ENCODE measurements at regions of chr3 and their contacts with region 1.

Region 1: GRCh38 chr3:51941798-51942602 is at the starts of genes PARP3 and RRP9:
- DNase-seq: peak; percentile 100
- CTCF ChIP-seq: peak; percentile 99

Region 2: DNA sequence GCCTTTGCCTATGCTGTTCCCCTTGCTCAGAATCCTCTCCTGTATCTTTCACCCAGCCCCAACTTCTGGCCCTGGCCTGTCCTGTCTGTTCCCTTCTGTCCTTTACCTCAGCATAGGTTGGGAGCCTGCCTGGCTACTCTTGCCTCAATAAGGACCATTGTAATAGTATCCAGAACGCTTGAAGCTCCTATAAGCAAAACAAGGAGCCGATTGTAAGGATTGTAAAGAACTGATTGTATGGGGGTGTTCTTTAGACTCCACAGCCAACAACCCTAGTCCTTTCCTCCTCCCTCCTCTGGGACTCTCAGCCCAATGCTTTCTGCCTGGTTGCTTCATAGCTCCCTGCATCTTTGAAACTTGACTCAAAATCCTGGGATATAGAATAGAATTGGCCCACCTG is 422.2 kb before region 1 on chr3:
- CTCF ChIA-PET with region 1: no interaction called
- POLR2A ChIA-PET with region 1: no interaction called
- DNase-seq: no peak
- CTCF ChIP-seq: no peak

Region 3: DNA sequence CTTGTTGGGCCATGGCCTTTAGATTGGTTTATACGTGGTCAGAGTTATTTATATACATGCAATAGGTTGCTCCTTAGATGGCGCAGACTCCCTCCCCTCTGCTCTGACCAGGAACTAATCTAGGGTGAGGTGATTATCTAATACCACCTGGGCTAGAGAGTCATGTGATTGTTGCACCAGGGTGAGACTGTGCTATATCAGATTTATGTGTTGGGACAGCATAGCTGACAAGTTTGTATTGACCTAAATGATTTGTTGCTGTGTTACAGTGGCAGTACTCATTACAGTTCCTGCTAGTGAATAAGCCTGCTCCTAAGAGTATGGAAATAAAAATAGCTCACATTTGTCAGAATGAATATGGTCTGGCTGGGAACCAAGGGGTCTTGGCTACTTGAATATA is 155.7 kb before region 1 on chr3:
- CTCF ChIA-PET with region 1: no interaction called
- POLR2A ChIA-PET with region 1: no interaction called
- DNase-seq: no peak
- CTCF ChIP-seq: no peak

Region 4: GRCh38 chr3:51955893-51956770 is 14.1 kb after region 1 on chr3:
- CTCF ChIA-PET with region 1: interaction called, 32 read pairs
- POLR2A ChIA-PET with region 1: no interaction called
- DNase-seq: no peak
- CTCF ChIP-seq: peak; percentile 17

Region 5: DNA sequence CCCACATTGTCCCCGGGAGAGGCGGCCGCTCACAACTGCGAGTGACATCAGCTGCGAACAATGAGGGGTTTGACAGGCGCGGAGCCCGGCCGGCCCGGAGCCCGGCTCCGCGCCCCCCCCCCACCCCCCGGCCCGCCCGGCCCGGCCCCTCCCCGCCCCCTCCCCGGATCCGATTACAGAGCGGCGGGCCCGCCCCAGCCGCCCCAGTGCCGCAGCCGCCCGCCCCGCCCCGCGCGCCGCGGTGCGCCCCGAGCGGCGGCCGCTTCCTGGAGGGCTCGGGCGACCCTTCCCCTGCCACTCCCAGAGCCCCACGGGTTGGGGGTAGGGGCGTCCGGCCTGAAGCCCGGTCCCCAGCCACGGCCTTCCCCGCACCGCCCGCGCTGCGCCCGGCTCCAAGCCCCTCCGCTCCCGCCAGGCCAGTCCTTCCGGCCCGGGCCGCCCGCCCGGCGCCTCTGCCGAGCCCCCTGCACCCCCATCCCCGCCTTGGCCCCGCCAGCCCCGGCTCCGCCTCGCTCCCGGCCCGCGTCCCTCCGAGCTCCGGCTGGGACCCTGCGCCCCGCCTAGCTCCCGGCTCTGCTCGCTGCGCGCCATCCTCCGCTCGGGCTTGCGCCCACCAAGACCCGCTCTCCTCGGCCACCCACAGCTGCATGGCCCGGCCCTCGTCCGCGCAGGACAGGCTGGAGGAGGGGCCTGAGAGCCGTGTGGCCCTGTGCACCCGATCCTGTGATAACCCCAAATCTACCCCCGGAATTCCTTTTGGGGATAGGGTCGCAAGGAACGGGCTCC is 25.6 kb after region 1 on chr3 and contains the start of gene PCBP4:
- CTCF ChIA-PET with region 1: interaction called, 42 read pairs
- POLR2A ChIA-PET with region 1: no interaction called
- DNase-seq: peak; percentile 57
- CTCF ChIP-seq: no peak

Region 6: GRCh38 chr3:51974963-51975851 is 33.2 kb after region 1 on chr3 and contains the start of gene ABHD14A:
- CTCF ChIA-PET with region 1: interaction called, 42 read pairs
- POLR2A ChIA-PET with region 1: interaction called, 3 read pairs
- DNase-seq: peak; percentile 92
- CTCF ChIP-seq: no peak

Region 7: DNA sequence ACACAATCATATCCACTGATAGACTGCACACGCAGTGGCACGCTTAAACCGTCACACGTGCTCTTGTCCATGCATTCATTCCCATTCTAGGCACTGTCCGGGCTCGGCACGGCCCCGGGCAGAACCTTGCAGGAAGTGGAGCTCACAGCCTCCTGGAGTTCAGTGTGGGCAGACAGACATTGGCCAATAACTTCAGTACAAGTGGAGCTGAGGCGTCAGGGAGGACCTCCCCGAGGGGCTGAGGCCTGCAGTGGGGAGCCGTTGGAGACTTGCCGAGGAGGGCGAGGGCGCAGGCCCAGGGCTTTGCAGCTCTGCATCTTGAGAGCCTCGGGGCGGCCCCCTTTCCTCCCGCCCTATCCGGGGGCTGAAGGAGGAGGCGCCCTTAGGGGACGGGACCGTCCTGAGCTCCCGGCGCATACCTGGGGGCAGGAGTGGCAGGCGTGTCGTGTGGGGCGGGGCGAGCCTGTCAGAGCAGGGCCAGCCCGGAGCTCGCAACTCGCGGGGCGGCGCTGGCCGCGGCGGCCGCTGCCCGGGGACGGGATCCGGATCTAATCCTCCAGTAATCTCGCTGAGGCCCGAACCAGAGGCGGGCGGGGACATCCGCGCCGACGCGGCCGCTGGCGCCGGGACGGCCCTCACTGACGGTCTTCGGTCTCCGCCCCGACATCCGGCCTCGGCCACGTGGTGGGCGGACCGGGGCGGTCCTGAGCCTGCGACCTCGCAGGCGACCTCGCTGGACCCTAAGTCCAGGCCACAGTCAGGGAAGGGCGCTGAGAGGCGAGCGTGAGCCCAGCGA is 41.0 kb after region 1 on chr3 and contains the start of gene ACY1:
- CTCF ChIA-PET with region 1: interaction called, 33 read pairs
- POLR2A ChIA-PET with region 1: no interaction called
- DNase-seq: peak; percentile 95
- CTCF ChIP-seq: no peak

Region 8: DNA sequence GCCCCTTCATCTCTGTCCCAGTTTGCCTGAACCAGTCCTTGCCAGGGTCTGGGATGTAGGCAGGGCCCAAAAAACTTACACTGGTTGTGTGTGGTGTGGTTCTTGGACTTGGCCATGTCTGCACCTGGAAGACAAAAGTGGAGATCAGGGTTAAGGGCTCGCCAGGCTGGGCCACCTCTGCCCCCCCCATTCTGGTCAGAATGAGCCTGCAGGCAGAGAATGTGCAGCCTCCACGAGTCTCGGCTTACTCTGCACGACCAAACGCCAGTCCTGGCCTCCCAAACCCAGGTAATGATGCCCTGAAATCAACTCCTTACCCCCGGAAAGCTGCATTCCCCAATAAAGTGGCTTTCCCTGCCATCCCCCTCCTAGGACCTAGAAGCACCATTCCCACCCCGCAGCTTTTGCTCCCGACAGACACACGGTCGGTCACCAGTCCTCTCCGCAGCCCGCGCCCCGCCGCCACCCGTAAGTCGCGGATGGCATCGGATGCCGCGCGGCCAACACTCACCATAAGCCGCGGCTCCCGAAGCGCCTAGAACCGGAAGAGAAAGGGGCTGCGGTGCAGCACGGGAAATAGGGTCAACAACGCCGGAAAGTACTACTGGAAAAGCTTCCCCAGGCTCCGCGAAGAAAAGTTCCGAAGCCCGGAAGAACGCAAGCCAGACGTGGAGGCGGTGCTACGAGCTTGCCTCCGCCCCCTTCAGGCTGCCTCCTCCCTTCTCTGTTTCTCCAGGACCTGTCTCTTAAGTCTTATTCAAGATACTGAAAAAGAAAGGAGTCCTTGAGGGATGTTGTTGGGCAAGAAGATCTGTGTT is 53.6 kb after region 1 on chr3 and contains the start of gene RPL29:
- CTCF ChIA-PET with region 1: interaction called, 12 read pairs
- POLR2A ChIA-PET with region 1: interaction called, 3 read pairs
- DNase-seq: peak; percentile 94
- CTCF ChIP-seq: no peak

Region 9: DNA sequence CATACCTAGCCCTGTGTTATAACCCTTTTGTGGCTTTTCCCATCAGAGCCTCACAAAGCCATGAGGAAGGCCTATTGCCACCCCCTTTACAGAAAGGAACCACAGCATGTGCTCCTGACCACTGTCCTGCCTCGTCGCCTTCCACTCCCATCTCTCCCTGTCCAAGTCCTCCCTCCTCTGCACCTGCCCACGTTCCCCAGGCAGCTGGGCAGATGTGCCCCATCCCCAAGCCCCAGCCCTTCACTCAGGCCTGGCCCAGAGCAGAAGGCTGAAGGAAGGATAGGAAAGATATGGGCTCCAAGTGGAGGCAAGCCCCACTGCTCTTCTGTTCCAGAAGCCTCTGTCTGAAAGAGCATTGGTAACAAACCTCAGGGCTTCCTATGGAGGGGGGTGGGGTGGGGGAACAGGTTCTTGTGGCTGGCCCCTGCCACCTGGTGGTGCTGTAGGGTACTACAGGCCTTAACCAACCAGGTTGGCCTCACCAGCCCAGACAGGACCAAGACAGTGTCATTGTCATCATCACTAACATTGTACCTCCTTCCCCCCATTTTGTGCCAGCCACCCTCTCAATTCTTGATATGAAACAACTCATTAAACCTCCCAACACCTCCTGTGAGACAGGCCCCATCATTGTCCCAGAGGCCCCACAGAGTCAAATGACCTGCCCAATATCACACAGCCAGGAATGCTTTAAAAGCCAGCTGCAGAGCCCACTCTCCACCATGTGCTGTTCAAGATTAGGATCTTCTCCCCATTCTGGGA is 202.2 kb after region 1 on chr3:
- CTCF ChIA-PET with region 1: interaction called, 10 read pairs
- POLR2A ChIA-PET with region 1: no interaction called
- DNase-seq: peak; percentile 88
- CTCF ChIP-seq: peak; percentile 95